ENCODE measurements at regions of chr3 and their contacts with region 1.

Region 1: GRCh38 chr3:187139126-187139894 is at the start of gene RPL39L:
- DNase-seq: peak; percentile 97
- ATAC-seq: peak; percentile 94
- H3K4me3 Mint-ChIP-seq: peak within 1 kb of the TSS; percentile 79
- H3K27ac Mint-ChIP-seq: peak within 1 kb of the TSS; percentile 95
- H3K4me1 Mint-ChIP-seq: peaks cover 27% of the 10 kb centered on the region
- H3K27me3 Mint-ChIP-seq: no peaks in the 10 kb centered on the region
- total RNA-seq, gene RPL39L: 18.2 to 21.4 TPM

Region 2: DNA sequence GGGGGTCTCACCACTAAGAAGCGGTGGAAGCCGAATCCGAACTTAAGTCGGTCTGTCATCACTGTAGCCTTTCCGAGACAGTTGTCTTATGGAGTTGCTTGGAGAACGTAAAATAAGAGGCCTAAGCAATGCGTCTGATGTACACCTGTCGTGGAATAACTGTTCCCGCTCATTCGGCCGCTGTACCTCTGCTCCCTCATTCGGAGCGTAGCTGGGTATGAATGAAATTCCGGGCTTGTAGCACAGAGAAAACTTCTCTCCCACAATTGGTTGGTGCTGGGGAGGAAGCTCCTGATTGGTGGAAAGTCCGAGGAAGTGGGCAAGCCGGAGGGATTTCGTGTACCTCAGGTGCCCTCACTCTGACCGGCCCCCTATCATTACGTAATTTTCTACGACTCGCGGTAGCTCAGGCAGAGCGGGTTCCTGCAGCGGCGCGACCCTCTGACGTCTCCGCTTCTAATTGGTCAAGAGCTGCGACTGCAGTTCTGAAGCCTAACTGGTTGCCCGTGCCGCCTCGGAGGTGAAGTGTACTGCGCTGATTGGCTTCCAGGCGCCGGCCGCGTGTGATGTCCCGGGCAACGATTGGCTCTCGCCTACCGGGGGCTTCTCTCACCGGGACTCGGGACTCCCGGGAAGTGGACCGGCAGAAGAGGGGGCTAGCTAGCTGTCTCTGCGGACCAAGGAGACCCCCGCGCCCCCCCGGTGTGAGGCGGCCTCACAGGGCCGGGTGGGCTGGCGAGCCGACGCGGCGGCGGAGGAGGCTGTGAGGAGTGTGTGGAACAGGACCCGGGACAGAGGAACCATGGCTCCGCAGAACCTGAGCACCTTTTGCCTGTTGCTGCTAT is 569.0 kb before region 1 on chr3 and contains the start of gene DNAJB11:
- CTCF ChIA-PET with region 1: no interaction called
- POLR2A ChIA-PET with region 1: no interaction called
- intact Hi-C with region 1: loop called in 1 of 2 experiments (anchors 2 kb)
- DNase-seq: peak; percentile 100
- ATAC-seq: peak; percentile 92
- H3K4me3 Mint-ChIP-seq: peak within 1 kb of the TSS; percentile 93
- H3K27ac Mint-ChIP-seq: peak within 1 kb of the TSS; percentile 95
- H3K4me1 Mint-ChIP-seq: peaks cover 50% of the 10 kb centered on the region
- H3K27me3 Mint-ChIP-seq: no peaks in the 10 kb centered on the region
- total RNA-seq, gene DNAJB11: 30.9 to 36.6 TPM

Region 3: GRCh38 chr3:186826976-186827731 is 312.2 kb before region 1 on chr3:
- CTCF ChIA-PET with region 1: interaction called, 6 read pairs
- POLR2A ChIA-PET with region 1: interaction called, 5 read pairs
- intact Hi-C with region 1: loop called in 1 of 2 experiments (anchors 2 kb)
- DNase-seq: peak; percentile 91
- ATAC-seq: peak; percentile 83
- H3K4me3 Mint-ChIP-seq: peak overlapping the region; percentile 82
- H3K27ac Mint-ChIP-seq: no peak overlapping the region
- H3K4me1 Mint-ChIP-seq: peaks cover 23% of the 10 kb centered on the region
- H3K27me3 Mint-ChIP-seq: peaks cover 31% of the 10 kb centered on the region

Region 4: GRCh38 chr3:186930641-186931531 is 208.4 kb before region 1 on chr3:
- CTCF ChIA-PET with region 1: interaction called, 5 read pairs
- POLR2A ChIA-PET with region 1: no interaction called
- intact Hi-C with region 1: loop called in 1 of 2 experiments (anchors 2 kb)
- DNase-seq: peak; percentile 79
- ATAC-seq: peak; percentile 80
- H3K4me3 Mint-ChIP-seq: peak overlapping the region; percentile 90
- H3K27ac Mint-ChIP-seq: peak overlapping the region; percentile 96
- H3K4me1 Mint-ChIP-seq: peaks cover 35% of the 10 kb centered on the region
- H3K27me3 Mint-ChIP-seq: no peaks in the 10 kb centered on the region

Region 5: GRCh38 chr3:187112934-187113793 is 26.1 kb before region 1 on chr3:
- CTCF ChIA-PET with region 1: interaction called, 36 read pairs
- POLR2A ChIA-PET with region 1: no interaction called
- intact Hi-C with region 1: no loop called
- DNase-seq: no peak
- ATAC-seq: peak; percentile 63
- H3K4me3 Mint-ChIP-seq: no peak overlapping the region
- H3K27ac Mint-ChIP-seq: peak overlapping the region; percentile 35
- H3K4me1 Mint-ChIP-seq: peaks cover 7% of the 10 kb centered on the region
- H3K27me3 Mint-ChIP-seq: no peaks in the 10 kb centered on the region

Region 6: DNA sequence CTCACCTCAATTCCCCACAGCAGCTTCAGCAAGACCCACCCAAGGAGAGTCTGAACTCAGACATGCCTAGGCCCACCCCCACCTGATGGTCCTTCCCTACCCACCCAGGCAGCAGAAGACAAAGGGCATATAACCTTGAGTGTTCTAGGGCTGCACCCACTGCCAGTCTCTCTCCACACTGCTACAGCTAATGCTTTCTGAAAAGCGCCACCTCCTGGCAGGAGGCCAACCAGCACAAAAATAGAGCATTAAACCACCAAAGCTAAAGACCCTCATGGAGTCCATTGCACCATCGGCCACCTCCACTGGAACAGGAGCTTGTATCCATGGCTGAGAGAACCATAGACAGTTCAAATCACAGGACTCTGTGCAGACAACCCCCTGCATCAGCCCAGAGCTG is 11.3 kb after region 1 on chr3:
- CTCF ChIA-PET with region 1: interaction called, 81 read pairs
- POLR2A ChIA-PET with region 1: interaction called, 4 read pairs
- intact Hi-C with region 1: no loop called
- DNase-seq: peak; percentile 82
- ATAC-seq: peak; percentile 86
- H3K4me3 Mint-ChIP-seq: no peak overlapping the region
- H3K27ac Mint-ChIP-seq: no peak overlapping the region
- H3K4me1 Mint-ChIP-seq: peaks cover 5% of the 10 kb centered on the region
- H3K27me3 Mint-ChIP-seq: peaks cover 2% of the 10 kb centered on the region

Region 7: DNA sequence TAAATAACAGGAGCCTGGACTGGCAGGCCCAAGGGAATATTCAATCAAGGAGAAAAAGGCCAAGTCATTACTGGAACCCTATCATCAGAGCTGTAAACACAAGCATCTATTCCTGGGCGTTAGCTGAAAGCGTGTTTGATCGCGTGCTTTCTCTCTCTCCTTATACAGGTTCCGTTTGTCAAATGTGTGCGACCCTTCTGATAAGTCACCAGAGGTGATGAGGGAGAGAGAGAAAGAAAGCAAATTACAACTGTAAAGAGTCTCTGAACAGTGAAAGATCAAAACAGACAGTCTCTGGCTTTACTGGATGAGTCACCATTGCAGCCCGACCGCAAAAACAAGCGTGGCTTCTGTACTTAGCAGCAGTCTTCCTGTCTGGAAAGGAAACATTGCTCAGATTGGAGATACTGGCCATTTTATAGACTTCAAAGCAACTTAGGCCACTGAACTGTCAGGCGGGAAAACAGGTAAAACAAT is 1993.0 kb after region 1 on chr3:
- CTCF ChIA-PET with region 1: no interaction called
- POLR2A ChIA-PET with region 1: no interaction called
- intact Hi-C with region 1: loop called in 1 of 2 experiments (anchors 5 kb)
- DNase-seq: peak; percentile 88
- ATAC-seq: peak; percentile 96
- H3K4me3 Mint-ChIP-seq: peak overlapping the region; percentile 24
- H3K27ac Mint-ChIP-seq: peak overlapping the region; percentile 58
- H3K4me1 Mint-ChIP-seq: peaks cover 21% of the 10 kb centered on the region
- H3K27me3 Mint-ChIP-seq: no peaks in the 10 kb centered on the region

Measured in activated CD4-positive, alpha-beta T cell treated with anti-CD3 and anti-CD28 coated beads for 36 hours (primary cell).